Activated T-helper 1 cell treated with anti-CD3 and anti-CD28 coated beads, Interleukin-12 subunit alpha, Interleukin-12 subunit beta, Interleukin-2, Interleukin-4 antibody, amounts not matched to agents 30 ng/mL and 10 ng/mL and 1 ng/mL, durations not matched to agents 14 hours and 24 hours and 36 hours (primary cell): ENCODE measurements at regions of chr6 and their contacts with region 1.

Region 1: DNA sequence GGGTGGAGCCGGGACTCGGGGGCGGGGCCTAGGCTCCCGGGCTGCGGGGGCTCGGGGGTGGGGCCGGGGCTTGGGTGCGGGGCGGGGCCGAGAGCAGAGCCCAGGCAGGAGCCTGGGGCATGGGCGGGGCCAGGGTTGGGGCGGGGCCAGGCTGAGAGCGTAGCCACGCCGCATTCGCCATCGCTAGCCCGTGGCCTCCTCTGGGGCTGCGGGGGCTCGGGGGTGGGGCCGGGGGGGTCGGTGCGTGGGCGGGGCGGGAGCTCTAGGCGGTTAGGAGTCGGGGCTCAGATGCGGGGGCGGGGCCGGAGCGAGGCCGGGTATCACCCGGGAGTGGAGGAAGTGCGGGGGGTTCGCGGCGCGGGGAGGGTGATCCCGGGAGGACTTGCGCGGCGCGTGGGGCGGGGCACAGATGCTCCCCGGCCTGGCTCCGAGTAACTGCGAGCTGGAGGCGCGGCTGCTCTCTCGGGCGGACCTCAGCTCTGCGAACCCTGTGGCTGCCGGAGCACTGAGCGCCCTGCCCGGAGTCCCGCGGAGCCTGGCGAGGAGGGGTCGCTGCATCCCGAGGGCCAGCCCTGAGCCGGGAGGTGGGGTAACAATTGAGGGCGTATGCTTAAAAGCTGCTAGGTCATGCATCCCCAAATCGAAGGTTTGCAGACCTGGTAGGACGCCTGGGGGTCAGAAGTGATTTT is 434 bp upstream of the ECI2 start:
- DNase-seq: peak; percentile 88
- H3K4me3 Mint-ChIP-seq: peak overlapping the region; percentile 83
- H3K27ac Mint-ChIP-seq: peak overlapping the region; percentile 80
- H3K4me1 Mint-ChIP-seq: peaks cover 27% of the 10 kb centered on the region
- H3K27me3 Mint-ChIP-seq: peaks cover 4% of the 10 kb centered on the region

Region 2: DNA sequence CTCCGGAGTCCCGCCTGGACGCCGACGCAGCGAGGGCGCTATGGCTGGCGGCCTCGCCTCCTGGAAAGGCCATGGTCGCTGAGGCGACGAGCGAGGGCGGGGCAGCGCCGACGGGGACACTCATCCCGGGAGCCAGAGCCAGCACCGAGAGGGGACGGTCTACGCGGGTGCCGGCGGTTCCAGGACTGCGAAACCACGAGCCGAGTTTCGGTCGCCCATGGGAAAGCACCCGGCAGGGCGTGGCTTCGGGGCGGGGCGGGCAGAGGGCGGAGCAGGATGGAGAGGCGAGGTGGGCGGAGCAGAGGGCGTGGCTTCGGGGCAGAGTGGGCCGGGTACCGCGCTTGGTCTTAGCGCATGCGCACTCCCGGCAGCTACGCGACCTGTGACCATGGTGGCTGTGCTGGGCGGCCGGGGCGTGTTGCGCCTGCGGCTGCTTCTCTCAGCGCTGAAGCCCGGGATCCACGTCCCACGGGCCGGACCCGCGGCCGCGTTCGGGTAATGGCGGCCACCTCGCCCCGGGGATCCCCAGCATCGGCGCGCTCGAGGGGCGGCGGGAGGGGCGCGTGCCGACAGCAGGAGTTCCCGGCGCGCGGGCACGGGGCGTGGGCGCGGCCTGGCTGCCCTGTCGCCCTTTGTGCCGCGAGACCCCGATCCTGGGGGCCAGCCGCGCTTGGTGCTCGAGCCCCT is 1017.3 kb before region 1 on chr6 and contains the start of gene BPHL:
- intact Hi-C with region 1: loop called (anchors 1 kb)
- DNase-seq: peak; percentile 99
- H3K4me3 Mint-ChIP-seq: peak within 1 kb of the TSS; percentile 82
- H3K27ac Mint-ChIP-seq: peak within 1 kb of the TSS; percentile 78
- H3K4me1 Mint-ChIP-seq: peaks cover 23% of the 10 kb centered on the region
- H3K27me3 Mint-ChIP-seq: no peaks in the 10 kb centered on the region
- total RNA-seq, gene BPHL: 6.6 and 7.9 TPM in 2 replicates

Region 3: GRCh38 chr6:3848925-3849605 is 286.7 kb before region 1 on chr6 and contains the start of gene FAM50B:
- intact Hi-C with region 1: loop called (anchors 2 kb)
- DNase-seq: peak; percentile 87
- H3K4me3 Mint-ChIP-seq: peak within 1 kb of the TSS; percentile 55
- H3K27ac Mint-ChIP-seq: peak within 1 kb of the TSS; percentile 59
- H3K4me1 Mint-ChIP-seq: peaks cover 24% of the 10 kb centered on the region
- H3K27me3 Mint-ChIP-seq: no peaks in the 10 kb centered on the region
- total RNA-seq, gene FAM50B: 9.0 and 9.1 TPM in 2 replicates

Region 4: DNA sequence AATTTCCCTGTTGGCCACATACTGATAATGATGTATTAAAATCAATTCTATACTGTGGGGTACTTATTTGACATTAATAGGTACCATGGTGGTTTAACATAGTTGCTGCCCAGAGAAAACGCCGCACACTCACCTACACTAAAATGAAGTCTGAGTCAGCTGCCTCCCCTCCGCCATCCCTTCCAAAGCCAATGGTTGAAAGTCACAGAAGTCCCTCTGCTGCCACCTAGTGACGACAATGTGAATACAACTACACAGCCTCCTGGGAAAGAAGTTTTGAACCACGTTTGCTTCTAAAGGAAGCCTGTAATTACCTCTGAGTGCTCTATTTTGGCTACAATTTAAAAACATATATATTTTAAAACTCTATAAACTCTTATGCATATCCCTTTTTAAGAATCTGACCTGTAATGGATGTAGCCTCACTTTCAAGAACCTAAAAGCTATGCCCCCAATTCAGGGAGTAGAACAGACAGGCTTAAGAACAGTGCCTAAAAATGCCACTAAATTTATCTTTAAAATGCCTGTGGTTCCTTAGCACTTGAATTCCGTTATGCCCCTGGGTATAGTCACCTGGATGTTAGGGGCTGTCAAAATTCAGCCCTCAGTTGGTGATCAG is 20.1 kb after region 1 on chr6:
- intact Hi-C with region 1: loop called (anchors 1 kb)
- DNase-seq: peak; percentile 70
- H3K4me3 Mint-ChIP-seq: no peak overlapping the region
- H3K27ac Mint-ChIP-seq: no peak overlapping the region
- H3K4me1 Mint-ChIP-seq: peaks cover 6% of the 10 kb centered on the region
- H3K27me3 Mint-ChIP-seq: peaks cover 3% of the 10 kb centered on the region

Region 5: DNA sequence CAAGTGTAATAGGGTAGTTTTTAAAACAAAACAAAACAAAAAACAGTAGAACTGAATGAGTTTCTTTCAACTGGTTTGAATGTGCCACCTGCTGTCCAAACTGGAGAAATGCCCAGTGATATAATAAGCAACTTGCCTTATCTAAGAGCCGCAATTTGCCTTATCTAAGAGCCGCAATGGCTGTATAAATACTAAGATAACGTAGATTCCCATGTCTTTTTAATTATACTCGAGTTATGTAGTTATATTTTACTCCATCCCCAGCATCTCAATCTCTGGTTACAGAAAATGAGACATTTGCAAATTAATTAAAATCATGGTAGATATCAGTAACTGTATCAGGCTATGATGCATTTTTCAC is 800.9 kb after region 1 on chr6:
- intact Hi-C with region 1: loop called (anchors 5 kb)
- DNase-seq: no peak
- H3K4me3 Mint-ChIP-seq: no peak overlapping the region
- H3K27ac Mint-ChIP-seq: no peak overlapping the region
- H3K4me1 Mint-ChIP-seq: peaks cover 45% of the 10 kb centered on the region
- H3K27me3 Mint-ChIP-seq: no peaks in the 10 kb centered on the region